K562 (cell line): ENCODE measurements at regions of chr18 and their contacts with region 1.

Region 1: DNA sequence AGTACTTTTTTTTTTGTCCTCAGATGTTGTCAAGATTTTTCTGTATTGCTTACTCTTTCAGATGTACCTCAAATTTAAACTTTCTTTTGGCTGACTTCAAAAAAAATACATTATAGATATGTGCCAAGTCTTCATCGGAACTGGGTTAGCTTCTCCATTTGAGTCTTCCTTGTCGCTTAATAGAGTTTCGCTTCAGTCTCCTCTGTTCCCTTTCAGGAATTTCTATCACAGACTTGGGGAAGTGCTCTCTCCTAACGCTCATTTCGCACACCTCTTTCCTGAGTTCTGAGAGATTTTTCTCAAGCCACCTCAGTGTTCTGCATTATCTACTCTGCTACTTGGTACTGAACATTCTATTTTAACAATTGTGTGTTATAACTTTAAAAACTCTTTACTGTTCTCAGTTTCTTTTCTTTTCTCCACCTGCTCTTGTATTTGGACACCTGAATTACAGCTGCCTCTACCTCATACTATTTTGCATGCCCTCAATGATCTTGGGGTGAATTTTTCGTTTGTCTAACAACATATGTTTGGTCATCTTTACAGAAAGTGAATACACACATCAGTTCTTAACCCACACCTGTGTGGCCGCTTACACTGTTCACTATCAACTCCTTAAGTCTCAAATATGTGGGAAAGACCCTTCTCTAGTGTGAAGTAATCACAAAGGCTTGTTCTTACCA is 16.5 kb downstream of the PTPN2 start:
- DNase-seq: no peak
- ATAC-seq: peak; percentile 13; the same call in 1 of the 3 replicates
- H3K4me3 ChIP-seq: no peak overlapping the region
- H3K27ac ChIP-seq: peak overlapping the region; percentile 15; the same call in 1 of the 3 replicates
- H3K4me1 ChIP-seq: peaks cover 3 to 4% of the 10 kb centered on the region in 2 experiments; a peak in 3 of 5 replicates
- H3K27me3 ChIP-seq: no peaks in the 10 kb centered on the region
- CTCF ChIP-seq: no peak
- EP300 ChIP-seq: no peak
- POLR2A ChIP-seq: no peak
- RAD21 ChIP-seq: no peak

Region 2: GRCh38 chr18:12726774-12727550 is 140.6 kb before region 1 on chr18:
- CTCF ChIA-PET with region 1: no interaction called
- POLR2A ChIA-PET with region 1: no interaction called
- in situ Hi-C with region 1: no loop called
- intact Hi-C with region 1: no loop called
- DNase-seq: peak; percentile 57 to 76 (median 65)
- ATAC-seq: peak; percentile 81
- H3K4me3 ChIP-seq: no peak overlapping the region
- H3K27ac ChIP-seq: no peak overlapping the region
- H3K4me1 ChIP-seq: no peaks in the 10 kb centered on the region
- H3K27me3 ChIP-seq: no peaks in the 10 kb centered on the region
- CTCF ChIP-seq: peak; percentile 81 to 91 (median 84)
- EP300 ChIP-seq: no peak
- POLR2A ChIP-seq: peak; percentile 32; the same call in 1 of the 2 replicates
- RAD21 ChIP-seq: peak; percentile 90 to 92

Region 3: DNA sequence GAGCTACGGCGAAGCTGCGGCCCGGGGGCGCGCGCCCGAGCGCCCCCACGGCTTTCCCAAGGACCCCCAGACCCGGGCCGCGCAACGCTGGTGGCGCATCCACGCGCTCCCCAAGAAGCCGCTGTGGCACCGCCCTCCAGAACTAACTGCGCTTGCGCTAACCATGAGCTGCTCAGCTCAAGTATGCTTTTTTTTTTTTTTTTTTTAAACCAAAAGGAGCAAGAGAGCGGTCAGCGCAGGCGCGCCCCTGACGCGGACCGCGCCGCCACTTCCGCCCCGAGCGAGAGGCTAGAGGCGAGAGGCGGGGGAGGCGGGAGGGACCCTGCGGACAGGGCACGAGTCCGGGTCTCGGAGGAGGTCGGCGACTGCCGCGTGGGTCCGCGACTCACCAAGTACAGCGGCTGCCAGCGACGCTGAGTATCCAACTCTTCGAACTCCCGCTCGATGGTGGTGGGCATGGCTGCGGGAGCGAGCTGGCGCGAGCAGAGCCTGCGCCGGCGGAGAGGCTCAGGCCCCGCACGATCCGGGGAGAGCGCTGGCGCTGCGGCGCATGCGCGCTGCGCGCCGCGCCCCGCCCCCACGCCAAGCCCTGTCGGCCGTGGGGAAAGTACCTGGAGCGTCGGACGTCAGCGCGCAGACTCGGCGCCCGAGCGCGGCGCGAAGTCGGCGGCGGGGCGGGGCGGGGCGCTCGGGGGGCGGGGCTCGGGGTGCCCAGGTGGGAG is 16.3 kb after region 1 on chr18 and contains the start of gene PTPN2:
- CTCF ChIA-PET with region 1: no interaction called
- POLR2A ChIA-PET with region 1: interaction called, 12 read pairs
- in situ Hi-C with region 1: no loop called
- intact Hi-C with region 1: no loop called
- DNase-seq: peak; percentile 91 to 96 (median 92)
- ATAC-seq: peak; percentile 85
- H3K4me3 ChIP-seq: peak within 1 kb of the TSS; percentile 84
- H3K27ac ChIP-seq: peak within 1 kb of the TSS; percentile 98
- H3K4me1 ChIP-seq: peaks cover 32 to 45% of the 10 kb centered on the region in 2 experiments
- H3K27me3 ChIP-seq: no peaks in the 10 kb centered on the region
- CTCF ChIP-seq: no peak; a peak in 1 of 6 replicates
- EP300 ChIP-seq: no peak
- POLR2A ChIP-seq: peak; percentile 99
- RAD21 ChIP-seq: peak in 1 of 2 experiments; percentile 20; a peak in 2 of 4 replicates
- polyA plus RNA-seq, gene PTPN2: 36.6 to 46.3 TPM